Activated naive CD8-positive, alpha-beta T cell treated with anti-CD3 and anti-CD28 coated beads, Interleukin-2, amount 10 ng/mL, durations not matched to agents 7 days and 5 days (primary cell): ENCODE measurements at regions of chr17 and their contacts with region 1.

Region 1: DNA sequence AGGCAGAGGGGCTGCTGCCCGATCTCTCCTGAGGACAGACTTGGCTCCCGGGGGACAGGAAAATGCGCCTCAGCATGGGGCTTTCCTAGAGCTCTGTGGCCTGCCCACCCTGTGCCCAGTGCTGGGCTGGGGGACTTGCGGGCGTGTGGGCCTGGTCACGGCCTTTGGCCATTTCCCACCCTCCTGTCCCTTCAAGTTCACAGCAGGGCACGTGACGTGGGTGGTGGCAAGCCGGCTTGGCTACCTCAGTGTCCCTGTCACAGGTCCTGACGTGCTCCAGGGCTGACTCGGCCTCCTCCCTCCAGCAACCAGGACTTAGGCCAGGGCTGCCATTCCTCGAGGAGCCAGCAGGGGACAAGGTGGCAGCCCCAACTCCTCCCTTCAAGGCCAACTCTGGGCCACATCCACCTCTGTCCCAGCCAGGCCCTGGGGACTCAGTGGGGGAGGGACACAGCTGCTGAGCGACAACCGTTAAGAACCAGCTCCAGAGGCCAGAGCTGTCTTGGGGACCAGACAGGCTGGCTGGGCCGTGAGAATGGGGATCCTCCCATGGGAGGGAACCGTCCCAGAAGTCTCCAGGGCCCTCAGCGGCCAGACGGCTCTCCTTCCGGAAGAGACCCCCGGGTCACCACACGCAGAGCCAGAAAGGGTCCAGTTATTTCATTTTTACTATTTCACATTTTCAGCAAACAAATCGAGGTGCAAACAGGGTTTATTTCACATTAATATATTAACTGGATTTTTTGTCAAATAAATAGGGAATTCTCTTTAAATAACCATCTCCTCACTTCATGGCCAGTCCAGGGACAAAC is 1.1 kb upstream of the UNC13D start:
- DNase-seq: peak; percentile 71
- ATAC-seq: peak; percentile 36
- H3K4me3 Mint-ChIP-seq: peak overlapping the region; percentile 51
- H3K27ac Mint-ChIP-seq: peak overlapping the region; percentile 83
- H3K4me1 Mint-ChIP-seq: peaks cover 14% of the 10 kb centered on the region
- H3K27me3 Mint-ChIP-seq: no peaks in the 10 kb centered on the region

Region 2: GRCh38 chr17:75720725-75721462 is 124.4 kb before region 1 on chr17 and contains the start of gene ITGB4:
- POLR2A ChIA-PET with region 1: no interaction called
- DNase-seq: peak; percentile 82
- ATAC-seq: peak; percentile 92
- H3K4me3 Mint-ChIP-seq: peak within 1 kb of the TSS; percentile 82
- H3K27ac Mint-ChIP-seq: peak within 1 kb of the TSS; percentile 64
- H3K4me1 Mint-ChIP-seq: peaks cover 4% of the 10 kb centered on the region
- H3K27me3 Mint-ChIP-seq: peaks cover 30% of the 10 kb centered on the region
- total RNA-seq, gene ITGB4: 1.0 to 1.4 TPM

Region 3: DNA sequence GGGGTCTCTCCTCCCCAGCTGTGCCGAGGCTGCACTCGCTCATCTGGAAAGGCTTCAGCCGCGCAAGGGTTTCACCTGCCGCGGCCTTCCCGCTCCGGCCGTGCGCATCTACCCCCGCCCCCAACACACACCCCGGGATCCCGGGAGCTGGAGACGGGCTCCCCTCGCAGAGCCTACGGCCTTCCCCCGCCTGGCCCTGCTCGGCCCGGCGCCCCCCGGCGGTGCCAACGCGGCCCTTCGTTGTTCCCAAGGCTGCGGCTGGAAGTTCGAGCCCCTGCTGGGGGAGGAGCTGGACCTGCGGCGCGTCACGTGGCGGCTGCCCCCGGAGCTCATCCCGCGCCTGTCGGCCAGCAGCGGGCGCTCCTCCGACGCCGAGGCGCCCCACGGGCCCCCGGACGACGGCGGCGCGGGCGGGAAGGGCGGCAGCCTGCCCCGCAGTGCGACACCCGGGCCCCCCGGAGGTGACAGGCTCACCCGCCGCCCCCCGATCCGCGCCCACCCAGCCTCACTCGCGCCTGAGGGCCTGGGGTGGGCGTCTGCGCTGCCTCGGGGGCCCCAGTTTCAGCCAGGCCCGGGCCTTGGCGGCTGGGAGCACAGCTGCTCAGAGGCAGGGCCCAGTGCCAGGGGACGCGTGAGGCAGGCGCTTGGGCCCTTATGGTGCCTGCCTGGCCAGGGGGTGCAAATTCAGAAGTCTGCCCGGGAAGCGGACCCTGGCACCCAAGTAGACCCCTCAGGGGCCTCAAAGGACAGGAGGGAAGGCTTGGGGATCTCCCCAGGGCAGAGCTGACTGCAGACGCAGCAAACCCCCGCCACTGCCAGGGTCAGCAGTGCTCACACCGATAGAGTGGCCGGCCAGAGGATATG is 91.5 kb before region 1 on chr17:
- POLR2A ChIA-PET with region 1: interaction called, 10 read pairs
- DNase-seq: peak; percentile 89
- ATAC-seq: peak; percentile 81
- H3K4me3 Mint-ChIP-seq: peak overlapping the region; percentile 54
- H3K27ac Mint-ChIP-seq: no peak overlapping the region
- H3K4me1 Mint-ChIP-seq: peaks cover 8% of the 10 kb centered on the region
- H3K27me3 Mint-ChIP-seq: no peaks in the 10 kb centered on the region

Region 4: DNA sequence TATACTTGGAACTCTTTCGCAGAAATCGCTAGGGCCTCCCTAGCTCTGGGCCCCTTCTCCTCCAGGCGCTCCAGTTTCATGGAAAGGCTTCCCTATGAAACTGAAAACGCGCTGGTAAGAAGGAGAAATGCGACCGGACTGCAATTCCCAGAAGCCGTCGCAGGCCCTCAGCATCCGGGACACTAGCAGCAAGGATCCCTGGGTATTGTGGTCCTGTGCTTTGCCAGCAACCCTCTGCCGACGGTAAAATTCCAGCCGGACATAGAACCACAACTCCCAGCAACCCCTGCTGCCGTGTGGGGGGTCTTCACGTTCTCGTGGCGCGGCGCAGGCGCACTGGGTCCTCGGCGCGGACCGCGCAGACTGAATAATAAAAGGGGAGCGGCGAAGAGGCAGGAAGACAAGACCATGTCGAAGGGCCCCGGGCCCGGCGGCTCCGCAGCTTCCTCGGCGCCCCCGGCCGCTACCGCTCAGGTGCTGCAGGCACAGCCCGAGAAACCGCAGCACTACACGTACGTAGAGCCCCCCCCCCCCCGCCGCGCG is 60.7 kb before region 1 on chr17 and contains the start of gene UNK:
- POLR2A ChIA-PET with region 1: interaction called, 126 read pairs
- DNase-seq: peak; percentile 95
- ATAC-seq: peak; percentile 65
- H3K4me3 Mint-ChIP-seq: peak within 1 kb of the TSS; percentile 94
- H3K27ac Mint-ChIP-seq: peak within 1 kb of the TSS; percentile 99
- H3K4me1 Mint-ChIP-seq: peaks cover 36% of the 10 kb centered on the region
- H3K27me3 Mint-ChIP-seq: no peaks in the 10 kb centered on the region
- total RNA-seq, gene UNK: 37.4 to 39.8 TPM

Region 5: DNA sequence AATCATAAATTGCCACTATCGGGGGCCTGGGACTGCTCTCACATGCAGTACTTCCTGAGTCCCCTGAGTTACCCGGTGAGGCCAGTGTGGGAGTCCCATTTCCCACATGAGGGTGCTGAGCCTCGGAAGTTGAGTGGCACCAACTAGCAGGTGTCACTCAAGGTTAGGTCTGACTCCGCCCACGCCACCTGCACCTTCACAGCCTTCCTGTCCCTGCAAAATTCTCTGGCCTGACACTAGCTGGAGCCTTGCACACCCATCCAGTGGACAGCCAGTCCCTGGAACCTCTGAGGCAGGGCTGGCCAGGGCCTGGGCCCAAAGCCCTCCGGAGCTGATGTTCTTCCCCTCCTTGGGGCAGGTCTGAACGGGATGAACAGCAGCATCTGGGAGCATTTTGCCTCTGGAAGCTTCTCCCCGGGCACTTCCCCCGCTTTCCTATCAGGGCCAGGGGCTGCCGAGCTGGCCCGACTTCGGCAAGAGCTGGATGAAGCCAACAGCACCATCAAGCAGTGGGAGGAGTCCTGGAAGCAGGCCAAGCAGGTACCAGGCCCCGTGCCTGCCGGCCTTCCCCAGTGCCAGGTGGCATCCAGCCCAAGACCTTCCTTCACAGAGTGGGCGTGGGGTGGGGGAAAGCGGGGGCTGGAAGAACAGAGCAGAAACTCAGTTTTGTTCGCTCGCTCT is 23.0 kb before region 1 on chr17:
- POLR2A ChIA-PET with region 1: interaction called, 39 read pairs
- DNase-seq: no peak
- ATAC-seq: peak; percentile 50
- H3K4me3 Mint-ChIP-seq: no peak overlapping the region
- H3K27ac Mint-ChIP-seq: peak overlapping the region; percentile 87
- H3K4me1 Mint-ChIP-seq: peaks cover 17% of the 10 kb centered on the region
- H3K27me3 Mint-ChIP-seq: no peaks in the 10 kb centered on the region

Region 6: GRCh38 chr17:75827252-75828115 is 17.8 kb before region 1 on chr17:
- POLR2A ChIA-PET with region 1: interaction called, 75 read pairs
- DNase-seq: peak; percentile 77
- ATAC-seq: peak; percentile 41
- H3K4me3 Mint-ChIP-seq: peak overlapping the region; percentile 61
- H3K27ac Mint-ChIP-seq: peak overlapping the region; percentile 94
- H3K4me1 Mint-ChIP-seq: peaks cover 13% of the 10 kb centered on the region
- H3K27me3 Mint-ChIP-seq: no peaks in the 10 kb centered on the region

Region 7: GRCh38 chr17:75877752-75878173 is 32.5 kb after region 1 on chr17:
- POLR2A ChIA-PET with region 1: interaction called, 11 read pairs
- DNase-seq: peak; percentile 84
- ATAC-seq: peak; percentile 70
- H3K4me3 Mint-ChIP-seq: peak overlapping the region; percentile 91
- H3K27ac Mint-ChIP-seq: peak overlapping the region; percentile 93
- H3K4me1 Mint-ChIP-seq: peaks cover 28% of the 10 kb centered on the region
- H3K27me3 Mint-ChIP-seq: peaks cover 12% of the 10 kb centered on the region

Region 8: DNA sequence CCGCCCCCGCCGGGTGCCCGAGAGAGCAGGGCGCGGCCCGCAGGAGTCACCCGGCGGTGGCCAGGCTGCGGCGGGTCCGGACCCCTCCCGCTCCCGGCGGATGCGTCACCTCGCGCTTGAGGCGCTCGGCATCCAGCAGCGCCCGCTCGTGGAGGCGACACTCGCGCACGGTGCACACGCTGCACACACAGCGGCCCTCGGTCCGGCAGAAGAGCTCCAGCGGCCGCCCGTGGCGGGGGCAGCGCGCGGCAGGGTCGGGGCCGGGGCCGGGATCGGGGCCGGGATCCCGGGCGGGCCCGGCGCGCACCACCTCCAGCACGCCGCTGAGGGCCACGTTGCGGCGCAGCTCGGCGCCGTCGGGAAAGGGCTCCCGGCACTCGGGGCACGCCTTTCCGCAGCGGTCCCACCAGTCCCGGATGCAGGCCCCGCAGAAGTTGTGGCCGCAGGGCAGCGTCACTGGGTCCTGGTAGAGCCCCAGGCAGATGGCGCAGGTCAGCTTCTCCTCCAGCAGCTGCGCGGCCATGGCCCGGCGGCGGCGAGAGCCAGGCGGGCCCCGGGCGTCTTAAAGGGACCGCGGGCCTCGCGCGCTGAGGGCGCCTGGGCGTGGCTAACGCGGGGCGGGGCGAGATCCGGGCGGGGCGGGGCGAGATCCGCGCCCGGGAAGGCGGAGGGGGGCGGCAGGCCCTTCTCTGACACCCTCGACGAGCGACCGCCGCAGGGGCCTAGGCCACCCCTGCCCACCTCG is 51.3 kb after region 1 on chr17 and contains the start of gene TRIM65:
- POLR2A ChIA-PET with region 1: interaction called, 18 read pairs
- DNase-seq: peak; percentile 89
- ATAC-seq: peak; percentile 87
- H3K4me3 Mint-ChIP-seq: peak within 1 kb of the TSS; percentile 87
- H3K27ac Mint-ChIP-seq: peak within 1 kb of the TSS; percentile 86
- H3K4me1 Mint-ChIP-seq: peaks cover 18% of the 10 kb centered on the region
- H3K27me3 Mint-ChIP-seq: no peaks in the 10 kb centered on the region
- total RNA-seq, gene TRIM65: 35.3 to 36.3 TPM

Region 9: DNA sequence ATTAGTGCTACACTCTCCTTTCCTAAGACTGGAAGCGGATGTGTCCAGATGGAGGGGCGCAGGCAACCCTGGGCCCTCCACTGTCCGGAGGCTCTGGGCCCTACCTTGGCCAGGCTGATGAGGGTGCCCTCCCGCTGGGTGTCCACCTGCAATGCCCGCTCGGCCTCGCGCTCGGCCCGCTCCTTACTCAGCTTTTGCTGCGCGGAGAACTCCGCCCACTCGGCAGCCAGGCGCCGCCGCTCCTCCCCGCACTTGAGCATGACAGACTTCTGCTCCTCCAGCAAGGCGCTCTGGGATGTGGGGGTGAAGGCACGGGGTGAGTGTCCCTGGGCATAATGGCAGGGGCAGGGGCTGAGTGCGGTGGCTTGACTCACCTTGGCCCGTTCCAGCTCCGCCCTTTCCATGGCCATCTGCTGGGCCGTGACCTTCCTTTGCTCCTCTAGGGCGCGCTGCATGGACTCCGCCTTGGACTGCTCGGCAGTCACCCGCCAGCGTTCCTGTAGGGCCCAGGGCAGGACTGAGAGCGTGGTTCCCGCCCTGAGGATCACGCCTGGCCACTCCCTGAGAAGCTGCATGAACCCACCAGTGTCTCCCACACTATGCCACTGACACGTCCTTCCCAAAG is 69.5 kb after region 1 on chr17:
- POLR2A ChIA-PET with region 1: no interaction called
- DNase-seq: no peak
- ATAC-seq: no peak
- H3K4me3 Mint-ChIP-seq: no peak overlapping the region
- H3K27ac Mint-ChIP-seq: no peak overlapping the region
- H3K4me1 Mint-ChIP-seq: peaks cover 5% of the 10 kb centered on the region
- H3K27me3 Mint-ChIP-seq: no peaks in the 10 kb centered on the region